Panc1 (cell line): ENCODE measurements at regions of chr16 and their contacts with region 1.

Region 1: GRCh38 chr16:80766798-80767197 is 37.6 kb downstream of the CDYL2 start:
- DNase-seq: no peak
- ATAC-seq: no peak
- H3K4me3 ChIP-seq: no peak overlapping the region
- H3K27ac ChIP-seq: no peak overlapping the region
- H3K4me1 ChIP-seq: no peaks in the 10 kb centered on the region
- H3K27me3 ChIP-seq: no peaks in the 10 kb centered on the region
- CTCF ChIP-seq: no peak

Region 2: GRCh38 chr16:80377096-80377956 is 389.5 kb before region 1 on chr16:
- CTCF ChIA-PET with region 1: no interaction called
- POLR2A ChIA-PET with region 1: interaction called, 13 read pairs
- in situ Hi-C with region 1: no loop called
- intact Hi-C with region 1: no loop called
- DNase-seq: no peak
- ATAC-seq: no peak
- H3K4me3 ChIP-seq: no peak overlapping the region
- H3K27ac ChIP-seq: no peak overlapping the region
- H3K4me1 ChIP-seq: no peaks in the 10 kb centered on the region
- H3K27me3 ChIP-seq: no peaks in the 10 kb centered on the region
- CTCF ChIP-seq: no peak

Region 3: DNA sequence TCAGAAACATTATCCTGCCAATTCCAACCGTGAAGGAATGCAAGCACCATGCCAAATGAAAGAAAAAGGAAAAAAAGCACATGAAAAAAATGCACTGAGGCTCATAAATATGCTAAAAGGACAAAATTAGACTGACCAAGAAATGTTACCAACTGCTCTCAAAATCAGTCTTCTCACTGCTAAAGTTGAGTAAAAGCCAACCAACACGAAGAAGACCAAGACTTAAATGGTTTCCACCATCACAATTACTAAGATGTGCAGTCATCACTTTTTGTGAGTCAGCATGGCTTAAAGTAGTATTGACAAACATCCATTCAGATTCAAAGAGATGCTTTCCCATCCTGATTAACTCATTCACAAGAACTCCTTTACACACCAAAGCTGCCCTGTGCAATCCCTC is 21.2 kb after region 1 on chr16:
- CTCF ChIA-PET with region 1: no interaction called
- POLR2A ChIA-PET with region 1: no interaction called
- in situ Hi-C with region 1: no loop called
- intact Hi-C with region 1: no loop called
- DNase-seq: no peak
- ATAC-seq: no peak
- H3K4me3 ChIP-seq: no peak overlapping the region
- H3K27ac ChIP-seq: no peak overlapping the region
- H3K4me1 ChIP-seq: no peaks in the 10 kb centered on the region
- H3K27me3 ChIP-seq: no peaks in the 10 kb centered on the region
- CTCF ChIP-seq: no peak